Activated naive CD8-positive, alpha-beta T cell treated with anti-CD3 and anti-CD28 coated beads, Interleukin-2, amount 10 ng/mL, durations not matched to agents 7 days and 5 days (primary cell): ENCODE measurements at regions of chr22 and their contacts with region 1.

Region 1: GRCh38 chr22:40177738-40178416 is at the start of gene TNRC6B:
- DNase-seq: no peak
- ATAC-seq: peak; percentile 85
- H3K4me3 Mint-ChIP-seq: peak within 1 kb of the TSS; percentile 86
- H3K27ac Mint-ChIP-seq: peak within 1 kb of the TSS; percentile 87
- H3K4me1 Mint-ChIP-seq: peaks cover 43% of the 10 kb centered on the region
- H3K27me3 Mint-ChIP-seq: no peaks in the 10 kb centered on the region
- total RNA-seq, gene TNRC6B: 89.6 to 91.4 TPM

Region 2: GRCh38 chr22:40055143-40055883 is 122.6 kb before region 1 on chr22:
- POLR2A ChIA-PET with region 1: interaction called, 15 read pairs
- DNase-seq: no peak
- ATAC-seq: peak; percentile 91
- H3K4me3 Mint-ChIP-seq: peak overlapping the region; percentile 84
- H3K27ac Mint-ChIP-seq: peak overlapping the region; percentile 96
- H3K4me1 Mint-ChIP-seq: peaks cover 68% of the 10 kb centered on the region
- H3K27me3 Mint-ChIP-seq: no peaks in the 10 kb centered on the region

Region 3: DNA sequence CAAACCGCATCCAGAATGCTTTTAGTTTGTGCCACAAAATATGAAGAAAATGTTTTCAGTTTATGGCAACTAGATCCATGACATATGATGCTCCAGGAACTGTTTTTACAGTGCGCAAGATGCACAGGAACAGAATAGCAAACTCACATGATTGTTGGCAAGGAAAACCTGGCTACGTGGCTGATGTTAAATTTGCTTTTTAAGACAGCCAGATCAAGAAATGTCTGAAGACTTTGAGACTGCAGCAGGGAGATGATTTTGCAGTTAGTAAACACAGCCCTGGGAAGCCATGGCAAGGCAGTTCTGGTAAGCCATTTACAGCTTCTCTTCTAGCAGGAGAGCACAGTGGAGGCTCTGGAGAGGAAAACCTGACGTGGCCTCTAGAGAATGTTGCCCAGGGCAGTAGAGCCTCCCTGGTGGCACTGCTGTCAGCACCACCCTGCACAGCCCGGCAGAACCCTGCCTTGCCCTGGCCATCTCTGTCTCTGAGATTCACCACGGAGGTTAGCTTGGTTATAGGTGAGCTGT is 70.0 kb before region 1 on chr22:
- POLR2A ChIA-PET with region 1: interaction called, 23 read pairs
- DNase-seq: peak; percentile 52
- ATAC-seq: peak; percentile 88
- H3K4me3 Mint-ChIP-seq: peak overlapping the region; percentile 82
- H3K27ac Mint-ChIP-seq: peak overlapping the region; percentile 91
- H3K4me1 Mint-ChIP-seq: peaks cover 52% of the 10 kb centered on the region
- H3K27me3 Mint-ChIP-seq: no peaks in the 10 kb centered on the region

Region 4: DNA sequence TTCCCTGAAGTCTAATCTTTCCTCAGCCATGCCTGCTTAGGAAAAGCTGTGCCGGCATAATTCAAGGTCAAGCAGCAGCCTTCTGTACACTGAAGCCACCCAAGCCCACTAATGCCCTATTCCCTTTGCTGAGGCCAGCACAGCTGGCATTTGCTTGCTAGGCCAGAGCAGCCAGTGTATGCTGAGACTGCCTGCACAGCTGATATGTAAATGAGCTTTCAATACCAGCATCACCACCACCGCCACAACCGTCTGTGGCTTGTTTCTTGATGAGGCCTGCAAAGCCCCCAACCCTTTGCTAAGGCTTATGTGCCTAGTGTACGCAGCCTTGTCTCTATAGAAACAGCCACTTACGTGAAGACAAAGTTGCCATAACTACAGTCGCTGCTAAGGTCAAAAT is 56.4 kb before region 1 on chr22:
- POLR2A ChIA-PET with region 1: interaction called, 10 read pairs
- DNase-seq: no peak
- ATAC-seq: peak; percentile 28
- H3K4me3 Mint-ChIP-seq: peak overlapping the region; percentile 25
- H3K27ac Mint-ChIP-seq: peak overlapping the region; percentile 35
- H3K4me1 Mint-ChIP-seq: peaks cover 53% of the 10 kb centered on the region
- H3K27me3 Mint-ChIP-seq: no peaks in the 10 kb centered on the region

Region 5: GRCh38 chr22:40128989-40129388 is 48.9 kb before region 1 on chr22:
- POLR2A ChIA-PET with region 1: interaction called, 11 read pairs
- DNase-seq: peak; percentile 53
- ATAC-seq: peak; percentile 99
- H3K4me3 Mint-ChIP-seq: peak overlapping the region; percentile 78
- H3K27ac Mint-ChIP-seq: peak overlapping the region; percentile 94
- H3K4me1 Mint-ChIP-seq: peaks cover 38% of the 10 kb centered on the region
- H3K27me3 Mint-ChIP-seq: no peaks in the 10 kb centered on the region

Region 6: DNA sequence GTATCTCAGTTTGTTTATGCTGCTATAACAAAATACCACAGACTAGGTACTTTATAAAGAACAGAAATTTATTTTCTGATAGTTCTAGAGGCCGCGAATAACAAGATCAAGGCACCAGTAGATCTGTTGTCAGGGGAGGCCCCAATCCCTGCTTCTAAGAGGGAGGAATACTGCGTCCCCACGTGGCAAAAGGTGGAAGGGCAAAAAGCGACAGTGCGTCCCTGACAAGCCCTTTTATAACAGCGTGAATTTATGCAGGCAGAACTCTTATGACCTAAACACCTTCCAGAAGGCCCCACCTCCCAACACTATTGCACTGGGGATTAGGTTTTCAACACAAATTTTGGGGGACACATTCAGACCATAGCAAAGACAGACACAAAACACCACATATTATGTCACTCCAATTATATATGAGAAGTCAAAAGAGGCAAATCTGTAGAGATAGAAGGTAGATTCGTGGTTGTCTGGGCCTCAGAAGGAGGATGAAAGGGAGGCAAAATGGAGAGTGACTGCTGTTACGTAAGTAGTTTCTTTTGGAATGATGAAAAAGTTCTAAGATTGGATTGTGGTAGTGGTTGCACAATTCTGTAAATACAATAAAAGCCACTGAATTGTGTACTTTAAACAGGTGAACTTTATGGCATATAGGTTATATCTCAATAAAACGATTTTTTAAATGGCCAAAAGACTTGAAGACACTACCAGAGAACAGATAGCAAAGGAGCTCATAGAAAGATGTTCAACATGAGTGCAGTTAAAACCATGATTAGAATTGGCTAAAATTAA is 30.3 kb before region 1 on chr22:
- POLR2A ChIA-PET with region 1: no interaction called
- DNase-seq: no peak
- ATAC-seq: no peak
- H3K4me3 Mint-ChIP-seq: no peak overlapping the region
- H3K27ac Mint-ChIP-seq: no peak overlapping the region
- H3K4me1 Mint-ChIP-seq: peaks cover 3% of the 10 kb centered on the region
- H3K27me3 Mint-ChIP-seq: no peaks in the 10 kb centered on the region